ENCODE measurements at regions of chr9 and their contacts with region 1.

Region 1: DNA sequence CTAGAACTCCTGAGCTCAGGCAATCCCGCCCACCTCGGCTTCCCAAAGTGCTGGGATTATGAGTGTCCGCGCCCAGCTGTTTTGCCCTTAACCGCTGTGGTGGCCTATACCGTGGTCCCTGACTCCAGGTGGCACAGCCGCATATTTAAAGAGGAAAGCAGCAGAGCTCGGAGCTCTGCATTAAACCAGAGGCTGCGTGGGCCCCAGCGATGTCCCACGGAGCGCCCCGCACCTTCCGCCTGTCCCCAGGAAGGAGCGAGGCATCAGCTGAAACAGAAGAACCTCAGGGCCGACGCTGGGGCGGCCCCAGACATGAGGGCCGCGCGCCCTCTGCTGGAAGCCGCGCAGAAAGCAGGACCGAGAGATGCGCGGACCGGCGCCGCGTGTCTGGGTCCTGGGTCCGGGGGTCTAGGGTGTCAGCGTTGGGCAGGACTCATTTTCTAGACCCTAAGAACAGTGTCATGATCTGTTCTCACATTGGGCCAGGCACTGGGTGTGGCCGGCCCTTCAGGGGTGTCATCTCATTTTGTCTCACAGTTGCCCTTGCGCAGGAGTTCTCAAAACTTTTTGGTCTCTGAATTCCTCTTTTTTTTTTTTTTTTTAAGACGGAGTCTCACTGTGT is 37.7 kb downstream of the LAMC3 start:
- H3K4me3 ChIP-seq: no peak overlapping the region
- H3K27ac ChIP-seq: no peak overlapping the region
- H3K4me1 ChIP-seq: no peaks in the 10 kb centered on the region
- CTCF ChIP-seq: peak; percentile 90

Region 2: DNA sequence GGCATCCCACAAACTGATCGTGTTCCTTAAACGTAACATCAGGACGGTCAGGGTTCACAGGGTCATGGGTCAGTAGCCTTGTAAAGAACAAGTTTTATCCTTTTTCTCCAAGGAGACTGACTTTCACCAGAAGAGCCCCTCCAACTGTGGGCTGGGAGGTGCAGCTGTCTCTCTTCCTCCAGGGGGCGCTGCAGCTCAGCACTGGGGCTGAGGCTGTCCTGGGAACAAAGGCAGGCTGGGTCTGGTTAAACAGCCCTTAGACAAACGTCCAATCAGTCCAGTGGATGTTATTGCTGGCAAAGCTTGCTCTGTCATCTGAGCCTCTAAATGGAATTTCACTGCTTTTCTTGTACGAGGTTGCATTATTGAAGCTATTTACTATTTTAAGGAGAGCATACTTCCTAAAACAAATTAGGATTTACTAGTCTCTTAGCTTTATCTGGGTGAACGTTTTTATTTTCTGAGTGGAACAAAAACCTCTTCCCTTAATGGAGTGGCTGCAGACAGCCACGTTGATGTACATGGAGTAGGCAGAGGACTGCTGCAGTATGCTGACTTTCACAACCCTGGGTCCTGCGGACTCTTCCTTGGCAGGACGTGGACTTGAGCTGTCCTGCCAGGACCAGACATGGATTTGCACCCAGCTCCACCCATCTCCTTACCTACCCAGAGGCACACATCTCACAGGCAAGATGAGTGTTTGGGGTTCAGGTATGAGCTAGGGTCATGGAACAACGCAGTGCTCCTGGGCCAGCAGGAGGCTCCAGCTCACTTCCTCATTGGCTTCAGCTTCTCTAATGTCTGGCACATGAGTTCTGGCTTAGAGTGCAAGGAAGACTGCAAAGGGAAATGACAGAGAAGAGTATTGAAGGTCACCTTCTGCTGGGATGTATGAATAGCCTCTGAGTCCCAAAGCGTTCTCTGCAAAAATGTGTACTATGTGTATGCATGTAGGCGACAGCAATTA is 345.4 kb before region 1 on chr9:
- CTCF ChIA-PET with region 1: interaction called, 14 read pairs
- POLR2A ChIA-PET with region 1: interaction called, 3 read pairs
- H3K4me3 ChIP-seq: no peak overlapping the region
- H3K27ac ChIP-seq: no peak overlapping the region
- H3K4me1 ChIP-seq: no peaks in the 10 kb centered on the region
- CTCF ChIP-seq: peak; percentile 88

Region 3: GRCh38 chr9:130893341-130894101 is 153.2 kb before region 1 on chr9:
- CTCF ChIA-PET with region 1: interaction called, 11 read pairs
- POLR2A ChIA-PET with region 1: no interaction called
- H3K4me3 ChIP-seq: no peak overlapping the region
- H3K27ac ChIP-seq: no peak overlapping the region
- H3K4me1 ChIP-seq: no peaks in the 10 kb centered on the region
- CTCF ChIP-seq: peak; percentile 53

Region 4: GRCh38 chr9:130973169-130973936 is 73.3 kb before region 1 on chr9:
- CTCF ChIA-PET with region 1: interaction called, 12 read pairs
- POLR2A ChIA-PET with region 1: no interaction called
- H3K4me3 ChIP-seq: no peak overlapping the region
- H3K27ac ChIP-seq: no peak overlapping the region
- H3K4me1 ChIP-seq: no peaks in the 10 kb centered on the region
- CTCF ChIP-seq: no peak

Region 5: DNA sequence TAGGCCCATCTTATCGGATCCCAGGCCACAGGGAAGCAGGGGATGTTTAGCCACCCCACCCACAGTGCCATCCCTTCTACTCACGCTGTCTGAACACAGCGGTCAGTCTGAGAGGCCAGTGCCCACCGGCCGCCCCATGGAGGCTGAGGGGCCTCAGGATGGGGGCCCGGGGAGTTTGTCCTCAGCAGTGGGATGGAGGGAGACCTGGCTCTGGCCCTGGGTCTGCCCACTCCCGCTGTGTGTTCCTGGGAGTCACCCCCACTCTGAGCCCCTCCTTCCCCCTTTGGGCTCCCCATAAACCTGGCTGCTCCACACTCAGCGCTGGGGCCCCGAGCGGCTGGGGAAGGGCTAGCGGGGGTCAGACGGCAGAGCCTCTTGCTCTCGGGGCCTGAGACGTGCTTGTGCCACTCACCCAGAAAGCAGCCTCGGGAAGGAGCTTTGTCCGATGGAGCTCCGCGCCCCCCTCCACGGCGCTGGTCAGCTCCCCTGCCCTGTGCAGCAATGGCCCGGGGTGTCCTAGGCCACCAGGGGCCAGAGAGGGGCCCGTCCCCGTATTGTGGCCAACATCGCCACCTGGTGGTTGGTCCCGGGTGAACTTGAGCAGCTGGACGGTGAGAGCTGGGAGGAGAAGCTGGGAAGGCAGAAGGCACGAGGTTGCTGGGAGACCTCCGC is 48.6 kb before region 1 on chr9:
- CTCF ChIA-PET with region 1: interaction called, 19 read pairs
- POLR2A ChIA-PET with region 1: interaction called, 4 read pairs
- H3K4me3 ChIP-seq: no peak overlapping the region
- H3K27ac ChIP-seq: no peak overlapping the region
- H3K4me1 ChIP-seq: no peaks in the 10 kb centered on the region
- CTCF ChIP-seq: peak; percentile 96

Region 6: DNA sequence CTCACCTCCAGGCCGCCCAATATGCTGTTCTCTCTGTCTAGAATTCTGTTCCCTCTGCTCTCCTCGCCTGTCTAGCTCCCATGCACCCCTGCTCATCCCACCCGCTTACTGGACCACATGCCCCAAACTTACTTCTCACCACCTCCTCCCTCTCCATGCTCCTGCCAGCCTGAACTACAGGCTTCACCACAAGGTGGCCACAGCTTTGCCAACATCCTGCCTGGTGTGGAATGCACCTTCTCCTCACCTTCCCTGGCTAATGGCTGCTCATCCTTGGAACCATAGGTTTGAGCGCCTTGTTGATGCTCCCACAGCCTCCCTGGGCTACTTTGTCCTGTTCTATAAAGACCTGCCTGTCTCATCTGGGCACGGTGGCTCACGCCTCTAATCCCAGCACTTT is 28.1 kb before region 1 on chr9:
- CTCF ChIA-PET with region 1: interaction called, 13 read pairs
- POLR2A ChIA-PET with region 1: no interaction called
- H3K4me3 ChIP-seq: no peak overlapping the region
- H3K27ac ChIP-seq: no peak overlapping the region
- H3K4me1 ChIP-seq: no peaks in the 10 kb centered on the region
- CTCF ChIP-seq: peak; percentile 73; the same call in 1 of the 2 replicates

Region 7: DNA sequence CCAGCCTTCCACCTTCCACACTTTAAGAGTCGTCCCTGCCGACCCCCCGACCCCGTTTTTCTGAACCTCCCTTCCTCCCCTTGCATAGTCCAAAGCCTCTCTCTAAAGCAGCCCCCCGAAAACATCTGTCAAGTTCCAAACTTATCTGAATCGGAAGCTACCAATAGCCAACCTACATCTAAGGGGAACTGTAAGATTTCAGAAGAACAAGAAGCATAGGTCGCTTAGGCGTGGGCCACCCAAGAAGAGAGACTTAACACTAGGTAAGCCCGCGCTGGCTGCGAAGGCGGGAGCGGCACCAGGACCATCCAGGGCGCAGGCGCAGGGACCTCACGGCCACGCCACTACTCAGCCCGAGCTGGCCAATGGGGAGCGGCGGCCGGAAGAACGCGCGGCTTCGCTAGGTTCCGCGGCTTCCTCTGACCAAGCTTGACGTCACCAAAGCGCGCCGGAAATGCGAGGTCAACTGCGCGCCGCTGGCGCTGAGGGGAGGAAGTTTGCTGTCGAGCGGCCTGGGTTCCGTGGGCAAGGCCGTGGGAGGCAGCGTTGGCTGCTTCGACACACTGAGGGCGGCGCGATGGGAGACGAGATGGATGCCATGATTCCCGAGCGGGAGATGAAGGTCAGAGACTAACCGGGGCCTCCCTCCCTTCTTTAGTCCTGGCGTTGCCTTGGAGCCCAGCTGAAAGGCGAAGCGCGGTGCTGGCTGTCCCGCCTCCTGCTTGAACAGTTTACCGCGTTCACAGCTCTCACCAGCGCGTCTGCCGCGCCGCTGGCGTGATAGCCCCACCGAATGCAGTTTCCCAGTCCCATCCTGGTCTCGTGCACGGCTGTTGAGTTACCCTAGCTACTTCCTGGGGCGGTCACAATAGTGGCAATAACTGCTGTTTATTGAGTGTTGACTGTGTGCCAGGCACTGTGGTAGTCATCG is 78.7 kb after region 1 on chr9 and contains the start of gene NUP214:
- CTCF ChIA-PET with region 1: interaction called, 10 read pairs
- POLR2A ChIA-PET with region 1: no interaction called
- H3K4me3 ChIP-seq: peak within 1 kb of the TSS; percentile 84
- H3K27ac ChIP-seq: peak within 1 kb of the TSS; percentile 28
- H3K4me1 ChIP-seq: no peaks in the 10 kb centered on the region
- CTCF ChIP-seq: no peak

Region 8: DNA sequence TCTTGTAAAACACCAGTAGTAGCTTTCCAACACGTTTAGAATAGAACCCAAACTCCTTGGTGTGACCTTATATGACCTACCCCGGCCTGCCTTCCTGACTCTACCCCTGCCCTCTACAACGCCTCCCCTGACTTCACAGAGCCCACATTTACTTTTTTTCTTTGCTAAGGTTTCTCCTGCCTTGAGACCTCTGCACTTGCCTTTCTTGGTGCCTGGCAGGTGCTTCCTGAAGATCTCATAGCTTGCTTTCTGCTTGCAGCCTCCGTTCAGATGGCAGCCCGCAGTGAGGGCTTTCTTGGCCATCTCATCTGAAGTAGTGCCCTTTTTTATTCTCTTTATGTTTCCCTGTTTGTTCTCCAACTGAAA is 103.0 kb after region 1 on chr9:
- CTCF ChIA-PET with region 1: no interaction called
- POLR2A ChIA-PET with region 1: no interaction called
- H3K4me3 ChIP-seq: no peak overlapping the region
- H3K27ac ChIP-seq: no peak overlapping the region
- H3K4me1 ChIP-seq: no peaks in the 10 kb centered on the region
- CTCF ChIP-seq: no peak